Endothelial cell of umbilical vein (primary cell): ENCODE measurements at regions of chrX and their contacts with region 1.

Region 1: GRCh38 chrX:13473442-13474163 is 95.8 kb upstream of the EGFL6 start:
- DNase-seq: peak; percentile 11
- H3K4me3 ChIP-seq: no peak overlapping the region
- H3K27ac ChIP-seq: no peak overlapping the region
- H3K4me1 ChIP-seq: peaks cover 9% of the 10 kb centered on the region
- H3K27me3 ChIP-seq: no peaks in the 10 kb centered on the region
- CTCF ChIP-seq: no peak
- POLR2A ChIP-seq: no peak

Region 2: DNA sequence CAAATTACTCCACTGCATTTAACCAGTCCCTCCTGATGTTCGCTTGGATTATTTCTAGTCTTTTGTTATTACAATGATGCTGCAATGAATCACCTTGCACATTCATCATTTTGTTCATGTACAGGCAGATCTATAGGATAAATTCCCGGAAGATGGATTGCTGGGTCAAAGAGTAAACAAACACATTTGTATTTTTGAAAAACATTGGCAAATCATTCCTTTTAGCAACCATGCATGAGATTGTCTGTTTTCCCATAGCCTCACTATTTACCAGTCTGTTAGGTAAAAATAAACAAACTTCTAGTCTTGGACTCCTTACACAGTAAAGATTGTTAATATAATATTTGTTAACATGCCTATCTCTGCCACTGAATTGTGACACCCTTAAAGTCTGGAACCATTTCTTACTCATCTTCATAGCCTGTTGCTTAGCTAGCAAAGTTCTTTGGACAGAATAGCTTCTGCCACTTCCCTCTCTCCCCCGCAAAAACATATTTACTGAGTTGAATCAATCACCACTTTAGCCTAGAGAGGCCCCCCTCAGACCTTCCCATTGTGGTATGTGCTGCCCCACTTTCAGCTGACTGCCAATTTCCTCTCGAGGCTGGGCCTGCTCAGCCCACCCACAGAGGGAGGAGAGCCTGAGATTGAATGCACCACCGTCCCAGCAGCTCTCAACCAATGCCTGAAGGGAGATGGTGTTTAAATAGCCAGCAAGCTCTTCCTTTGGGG is 45.4 kb before region 1 on chrX:
- CTCF ChIA-PET with region 1: no interaction called
- POLR2A ChIA-PET with region 1: no interaction called
- dilution Hi-C with region 1: no loop called
- intact Hi-C with region 1: loop called (anchors 5 kb)
- DNase-seq: peak; percentile 76
- H3K4me3 ChIP-seq: no peak overlapping the region
- H3K27ac ChIP-seq: peak overlapping the region; percentile 68
- H3K4me1 ChIP-seq: peaks cover 30% of the 10 kb centered on the region
- H3K27me3 ChIP-seq: no peaks in the 10 kb centered on the region
- CTCF ChIP-seq: no peak
- POLR2A ChIP-seq: no peak